MCF 10A (cell line): ENCODE measurements at regions of chrX and their contacts with region 1.

Region 1: GRCh38 chrX:65516756-65517155 is 17.8 kb downstream of the LAS1L start:
- DNase-seq: no peak
- H3K4me3 Mint-ChIP-seq: no peak overlapping the region
- H3K27ac Mint-ChIP-seq: no peak overlapping the region
- H3K4me1 Mint-ChIP-seq: no peaks in the 10 kb centered on the region
- H3K27me3 Mint-ChIP-seq: no peaks in the 10 kb centered on the region
- CTCF ChIP-seq: no peak

Region 2: DNA sequence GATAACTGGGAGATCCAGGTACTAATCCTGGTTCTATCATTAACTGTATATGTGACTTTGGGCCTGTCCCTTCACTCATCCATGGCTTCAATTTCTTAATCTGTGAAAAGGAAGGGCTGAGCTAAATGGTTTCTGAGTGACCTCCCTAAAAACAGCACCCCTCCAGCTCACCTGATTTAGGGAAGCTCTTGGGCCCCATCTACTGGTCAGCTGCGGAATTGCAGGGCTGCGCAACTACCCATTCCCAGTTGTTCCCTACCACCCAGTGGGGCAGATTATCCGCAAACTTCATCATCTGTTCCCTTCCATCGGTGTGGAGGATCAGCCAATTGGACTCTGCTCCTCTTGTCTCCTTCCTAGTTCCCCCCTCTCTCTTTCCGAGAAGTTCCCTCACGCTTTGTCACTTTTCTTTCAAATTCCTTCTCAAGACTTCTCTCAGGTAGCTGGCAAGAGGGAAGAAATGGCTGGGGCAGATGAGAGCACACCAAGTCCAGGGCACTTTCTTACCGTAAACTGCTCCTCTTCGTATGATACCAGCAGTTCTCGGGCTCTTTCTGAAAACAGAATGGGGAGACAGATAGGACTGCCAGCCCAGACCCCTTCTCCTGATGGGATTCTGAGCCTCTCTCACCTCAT is 12.1 kb after region 1 on chrX:
- CTCF ChIA-PET with region 1: interaction called, 70 read pairs
- POLR2A ChIA-PET with region 1: interaction called, 4 read pairs
- intact Hi-C with region 1: no loop called
- DNase-seq: peak; percentile 40
- H3K4me3 Mint-ChIP-seq: no peak overlapping the region
- H3K27ac Mint-ChIP-seq: no peak overlapping the region
- H3K4me1 Mint-ChIP-seq: no peaks in the 10 kb centered on the region
- H3K27me3 Mint-ChIP-seq: no peaks in the 10 kb centered on the region
- CTCF ChIP-seq: peak; percentile 94